ENCODE measurements at regions of chr17 and their contacts with region 1.

Region 1: DNA sequence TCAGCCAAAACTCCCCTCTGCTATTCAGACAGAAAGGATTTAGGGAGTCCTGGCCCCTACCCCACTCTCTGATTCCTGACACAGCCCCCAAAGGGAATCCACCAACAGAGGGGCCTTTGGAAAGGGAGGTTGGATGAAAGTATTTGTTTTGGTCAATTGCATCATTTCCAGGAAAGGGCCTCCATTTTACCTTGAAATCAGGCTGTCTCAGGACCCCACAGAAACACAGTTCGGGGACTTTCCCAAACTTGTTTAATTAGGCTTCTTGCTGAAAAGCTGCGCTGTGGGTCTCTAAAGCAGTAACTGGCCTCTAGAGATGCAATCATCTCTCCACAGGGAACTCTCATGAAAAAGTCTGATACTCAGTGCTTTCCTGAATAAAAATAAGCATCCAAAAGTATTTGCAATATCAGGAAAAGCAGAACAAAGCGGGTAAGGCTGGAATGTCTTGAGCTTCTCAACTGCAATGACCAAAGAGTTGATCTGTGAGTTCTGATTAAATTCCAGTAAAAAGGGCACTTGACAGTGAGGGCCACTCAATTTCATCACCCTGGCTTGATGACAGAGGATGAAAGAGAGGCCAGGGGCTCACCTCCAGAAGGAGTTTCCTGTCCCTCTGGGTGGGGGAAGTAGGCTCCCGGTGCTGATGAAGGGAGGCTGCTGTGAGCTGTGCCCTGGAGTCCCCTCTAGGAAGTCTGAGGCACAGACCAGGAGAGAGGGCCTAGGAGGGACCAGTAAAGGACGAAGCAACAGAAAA is 36.3 kb downstream of the LYRM9 start:
- DNase-seq: no peak
- ATAC-seq: no peak
- H3K4me3 ChIP-seq: no peak overlapping the region
- H3K27ac ChIP-seq: no peak overlapping the region
- H3K4me1 ChIP-seq: no peaks in the 10 kb centered on the region
- H3K27me3 ChIP-seq: no peaks in the 10 kb centered on the region

Region 2: DNA sequence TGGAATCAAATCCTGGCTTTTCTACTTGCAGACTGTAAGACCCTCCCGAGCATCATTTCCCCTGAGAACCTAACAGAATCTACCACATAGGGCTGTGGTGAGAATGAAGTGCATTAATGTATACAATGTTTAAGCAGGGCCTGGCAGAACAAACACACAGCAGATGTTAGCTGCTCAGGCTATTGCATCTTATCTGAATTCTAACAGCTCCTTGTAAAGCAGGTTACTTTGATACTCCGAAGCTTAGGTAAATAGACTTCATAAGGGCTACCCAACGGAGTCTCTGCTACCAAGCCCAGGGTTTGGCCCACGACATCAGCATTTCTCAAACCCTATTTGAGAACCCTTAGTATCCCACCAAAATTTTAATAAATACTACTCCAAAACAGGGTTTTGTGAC is 32.1 kb before region 1 on chr17:
- intact Hi-C with region 1: loop called in 1 of 2 experiments (anchors 5 kb)
- DNase-seq: no peak
- ATAC-seq: no peak
- H3K4me3 ChIP-seq: no peak overlapping the region
- H3K27ac ChIP-seq: no peak overlapping the region
- H3K4me1 ChIP-seq: no peaks in the 10 kb centered on the region
- H3K27me3 ChIP-seq: no peaks in the 10 kb centered on the region